HepG2 (cell line): ENCODE measurements at regions of chr7 and their contacts with region 1.

Region 1: DNA sequence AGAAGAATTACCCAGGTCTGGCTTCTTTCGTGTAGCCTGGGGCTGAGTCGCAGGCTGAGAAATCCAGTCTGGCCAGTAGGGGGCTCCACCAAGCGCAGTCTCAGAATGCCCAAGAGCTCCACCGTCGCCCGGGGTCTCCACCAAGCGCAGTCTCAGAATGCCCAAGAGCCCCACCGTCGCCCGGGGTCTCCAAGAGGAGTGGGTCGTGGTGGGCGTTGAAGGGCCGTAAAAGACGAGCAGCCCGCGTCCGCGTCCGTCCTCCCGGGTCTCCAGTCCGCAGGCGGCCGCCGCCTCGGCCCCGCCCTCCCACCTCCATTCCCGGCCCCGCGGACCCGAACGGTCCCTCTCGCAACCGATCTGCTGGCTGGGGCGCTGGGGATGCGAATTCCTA is 895 bp upstream of the ZYX start:
- DNase-seq: peak; percentile 61
- ATAC-seq: peak; percentile 73
- H3K4me3 ChIP-seq: peak overlapping the region; percentile 94 to 98 (median 98)
- H3K27ac ChIP-seq: peak overlapping the region; percentile 89
- H3K4me1 ChIP-seq: peaks cover 47% of the 10 kb centered on the region
- H3K27me3 ChIP-seq: no peaks in the 10 kb centered on the region
- CTCF ChIP-seq: peak; percentile 80
- EP300 ChIP-seq: no peak
- POLR2A ChIP-seq: 0 out of 4 replicates have a peak, but pooled peaks of 1 of the 2 experiments have one; percentile 5
- RAD21 ChIP-seq: peak; percentile 60; the same call in 1 of the 2 replicates

Region 2: GRCh38 chr7:143263266-143264195 is 116.7 kb before region 1 on chr7 and contains the start of gene GSTK1:
- CTCF ChIA-PET with region 1: no interaction called
- POLR2A ChIA-PET with region 1: interaction called, 10 read pairs
- in situ Hi-C with region 1: no loop called
- intact Hi-C with region 1: no loop called
- DNase-seq: peak; percentile 66
- ATAC-seq: peak; percentile 99
- H3K4me3 ChIP-seq: peak within 1 kb of the TSS; percentile 80 to 94 (median 94)
- H3K27ac ChIP-seq: peak within 1 kb of the TSS; percentile 92
- H3K4me1 ChIP-seq: peaks cover 41% of the 10 kb centered on the region
- H3K27me3 ChIP-seq: no peaks in the 10 kb centered on the region; a peak in 1 of 5 replicates
- CTCF ChIP-seq: peak; percentile 32
- EP300 ChIP-seq: peak in 1 of 2 experiments; percentile 22; a peak in 1 of 4 replicates
- POLR2A ChIP-seq: peak; percentile 88 to 98
- RAD21 ChIP-seq: peak; percentile 22
- total RNA-seq, gene GSTK1: 31.5 and 64.6 TPM in 2 replicates

Region 3: GRCh38 chr7:143287935-143288826 is 92.1 kb before region 1 on chr7 and contains the start of gene CASP2:
- CTCF ChIA-PET with region 1: no interaction called
- POLR2A ChIA-PET with region 1: interaction called, 3 read pairs
- in situ Hi-C with region 1: no loop called
- intact Hi-C with region 1: loop called (anchors 2 kb)
- DNase-seq: peak; percentile 89
- ATAC-seq: peak; percentile 68
- H3K4me3 ChIP-seq: peak within 1 kb of the TSS; percentile 72 to 80 (median 79)
- H3K27ac ChIP-seq: peak within 1 kb of the TSS; percentile 78
- H3K4me1 ChIP-seq: peaks cover 64% of the 10 kb centered on the region
- H3K27me3 ChIP-seq: no peaks in the 10 kb centered on the region; a peak in 1 of 5 replicates
- CTCF ChIP-seq: peak; percentile 50
- EP300 ChIP-seq: no peak
- POLR2A ChIP-seq: peak; percentile 87 to 92
- RAD21 ChIP-seq: peak; percentile 51
- total RNA-seq, gene CASP2: 13.7 and 21.2 TPM in 2 replicates

Region 4: DNA sequence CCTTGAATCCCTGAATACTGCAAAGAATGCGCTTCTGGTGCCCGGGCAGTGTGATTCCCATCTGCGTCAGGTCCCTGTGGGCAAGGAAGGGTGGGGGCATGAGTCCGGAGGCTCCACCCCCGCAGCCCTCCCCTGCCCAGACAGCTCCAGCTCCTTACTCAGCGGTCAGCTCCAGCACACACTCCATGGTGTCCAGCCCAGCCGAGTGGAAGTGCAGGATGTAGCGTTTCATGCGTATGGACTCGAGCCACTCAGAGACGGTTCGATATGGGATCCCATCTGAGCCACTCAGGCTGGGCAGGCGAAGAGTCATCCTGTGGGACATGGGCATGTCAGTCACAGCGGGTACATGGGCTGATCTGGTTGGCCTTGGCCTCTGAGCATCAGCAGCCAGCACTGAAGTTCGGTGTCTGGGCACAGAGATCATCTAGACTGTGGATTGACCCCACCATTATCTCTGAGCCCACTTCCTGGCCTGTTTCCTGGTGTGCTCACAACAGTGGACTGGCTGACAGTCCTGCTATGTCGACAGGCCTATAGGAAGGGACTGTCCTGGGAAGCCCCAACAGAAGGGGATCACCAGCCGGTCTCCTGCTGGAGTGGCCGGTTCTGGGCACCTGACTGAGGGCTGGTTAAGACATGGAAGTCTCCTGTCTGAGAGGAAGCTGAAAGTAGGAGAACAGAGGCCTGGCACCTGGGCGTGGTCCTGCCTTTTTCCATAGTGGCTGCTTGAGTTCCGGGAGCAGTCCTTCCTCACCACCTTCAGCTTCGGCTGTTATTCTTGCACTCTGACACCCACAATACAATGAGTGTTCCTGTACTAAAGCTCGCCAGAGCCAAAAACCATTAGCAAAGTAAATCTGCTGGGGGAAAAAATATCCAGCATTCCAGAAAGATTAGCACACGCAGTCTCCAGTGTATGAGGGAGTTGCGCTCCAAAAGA is 11.5 kb after region 1 on chr7:
- CTCF ChIA-PET with region 1: no interaction called
- POLR2A ChIA-PET with region 1: interaction called, 20 read pairs
- in situ Hi-C with region 1: no loop called
- intact Hi-C with region 1: loop called (anchors 1 kb)
- DNase-seq: no peak
- ATAC-seq: peak; percentile 1; the same call in 1 of the 3 replicates
- H3K4me3 ChIP-seq: no peak overlapping the region
- H3K27ac ChIP-seq: peak overlapping the region; percentile 82
- H3K4me1 ChIP-seq: peaks cover 69% of the 10 kb centered on the region
- H3K27me3 ChIP-seq: no peaks in the 10 kb centered on the region
- CTCF ChIP-seq: no peak
- EP300 ChIP-seq: 0 out of 4 replicates have a peak, but pooled peaks of 1 of the 2 experiments have one; percentile 14
- POLR2A ChIP-seq: no peak; a peak in 1 of 4 replicates
- RAD21 ChIP-seq: no peak

Region 5: DNA sequence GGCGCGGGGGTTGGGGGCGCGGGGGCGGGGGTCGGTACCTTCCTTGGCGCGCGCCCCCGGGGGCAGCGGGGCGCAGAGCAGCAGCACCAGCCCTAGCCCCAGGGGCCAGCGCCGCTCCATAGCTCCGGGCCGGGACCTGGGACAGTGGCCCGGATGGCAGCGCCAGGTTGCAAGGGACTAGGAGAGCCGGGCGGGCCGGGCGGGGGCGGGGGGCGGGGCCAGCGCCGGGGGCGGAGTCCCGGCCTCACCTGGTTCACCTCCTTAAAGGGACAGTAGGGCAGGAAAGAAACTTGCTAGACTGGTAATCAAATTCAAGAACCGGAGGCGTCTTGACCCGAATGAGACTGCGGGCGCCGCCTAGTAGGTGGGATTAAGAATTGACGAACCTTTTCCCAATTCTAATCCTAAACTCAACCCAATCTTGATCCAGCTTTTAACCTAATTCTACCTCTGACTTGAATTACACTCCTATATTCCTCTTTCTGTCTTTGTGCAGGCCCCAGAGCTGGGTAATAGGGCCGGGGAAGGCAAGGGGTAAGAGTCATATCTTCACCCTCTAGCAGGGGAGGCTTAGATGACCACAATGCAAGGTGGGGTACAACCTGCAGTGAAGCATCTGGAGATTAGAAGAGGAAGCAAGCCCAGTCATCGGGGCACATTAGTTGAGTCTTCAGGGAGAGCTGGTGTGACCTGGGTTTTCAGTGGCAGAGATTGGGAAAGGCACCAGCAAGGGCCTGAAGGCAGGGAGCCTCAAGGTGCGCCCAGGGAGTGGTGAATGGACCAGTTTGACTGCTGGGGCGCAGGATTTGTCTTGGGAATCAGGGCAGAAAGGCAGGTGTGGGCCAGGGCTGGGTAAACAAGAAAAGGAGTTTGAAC is 28.7 kb after region 1 on chr7 and contains the start of gene EPHA1:
- CTCF ChIA-PET with region 1: interaction called, 3 read pairs
- POLR2A ChIA-PET with region 1: interaction called, 9 read pairs
- in situ Hi-C with region 1: no loop called
- intact Hi-C with region 1: loop called (anchors 2 kb)
- DNase-seq: no peak
- ATAC-seq: peak; percentile 89
- H3K4me3 ChIP-seq: peak within 1 kb of the TSS; percentile 51 to 80 (median 71)
- H3K27ac ChIP-seq: no peak within 1 kb of the TSS
- H3K4me1 ChIP-seq: peaks cover 38% of the 10 kb centered on the region
- H3K27me3 ChIP-seq: peaks cover 0 to 6% of the 10 kb centered on the region in 2 experiments; a peak in 2 of 5 replicates
- CTCF ChIP-seq: 0 out of 2 replicates have a peak, but pooled peaks have one; percentile 3
- EP300 ChIP-seq: no peak
- POLR2A ChIP-seq: no peak
- RAD21 ChIP-seq: no peak
- total RNA-seq, gene EPHA1: 7.7 and 17.1 TPM in 2 replicates

Region 6: DNA sequence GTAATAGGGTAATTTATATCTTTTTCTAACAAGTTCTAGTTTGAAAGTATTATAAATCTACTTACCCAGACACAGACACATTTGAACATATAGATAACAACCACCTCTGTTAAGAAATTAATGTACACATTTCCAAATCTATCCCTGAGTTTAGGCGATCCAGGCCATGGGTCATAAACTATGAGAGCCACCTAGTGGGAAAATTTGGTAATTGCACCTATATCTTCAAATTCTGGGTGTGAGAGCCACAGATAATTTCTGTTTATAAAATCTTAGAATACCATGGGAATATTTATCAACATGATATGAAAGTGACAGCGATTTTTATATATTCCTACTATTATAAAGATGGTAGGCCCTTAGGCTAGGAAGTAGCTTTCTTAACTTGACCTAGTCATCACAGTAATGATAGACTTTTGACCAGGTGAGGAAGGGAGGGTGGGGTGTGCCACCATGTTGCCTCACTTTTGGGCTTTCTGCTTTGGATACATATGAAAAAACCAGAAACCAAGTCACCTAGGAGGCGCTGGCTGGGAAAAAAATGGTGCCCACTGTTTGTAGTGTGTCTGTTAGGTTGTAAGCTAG is 36.4 kb after region 1 on chr7:
- CTCF ChIA-PET with region 1: interaction called, 24 read pairs
- POLR2A ChIA-PET with region 1: no interaction called
- in situ Hi-C with region 1: loop called (anchors 5 kb)
- intact Hi-C with region 1: loop called (anchors 1 kb)
- DNase-seq: peak; percentile 48
- ATAC-seq: peak; percentile 74
- H3K4me3 ChIP-seq: no peak overlapping the region
- H3K27ac ChIP-seq: no peak overlapping the region
- H3K4me1 ChIP-seq: peaks cover 9% of the 10 kb centered on the region
- H3K27me3 ChIP-seq: peaks cover 2 to 14% of the 10 kb centered on the region in 2 experiments; a peak in 3 of 5 replicates
- CTCF ChIP-seq: peak; percentile 69
- EP300 ChIP-seq: no peak
- POLR2A ChIP-seq: no peak
- RAD21 ChIP-seq: peak; percentile 53; the same call in 1 of the 2 replicates

Region 7: GRCh38 chr7:143901668-143902331 is 521.5 kb after region 1 on chr7 and contains the start of gene TCAF1:
- CTCF ChIA-PET with region 1: no interaction called
- POLR2A ChIA-PET with region 1: no interaction called
- in situ Hi-C with region 1: loop called (anchors 25 kb)
- intact Hi-C with region 1: no loop called
- DNase-seq: peak; percentile 96
- ATAC-seq: peak; percentile 85
- H3K4me3 ChIP-seq: peak within 1 kb of the TSS; percentile 80 to 97 (median 90)
- H3K27ac ChIP-seq: peak within 1 kb of the TSS; percentile 99
- H3K4me1 ChIP-seq: peaks cover 64% of the 10 kb centered on the region
- H3K27me3 ChIP-seq: no peaks in the 10 kb centered on the region; a peak in 1 of 5 replicates
- CTCF ChIP-seq: peak; percentile 62
- EP300 ChIP-seq: peak; percentile 67 to 79; a peak in 3 of 4 replicates
- POLR2A ChIP-seq: peak; percentile 78 to 88
- RAD21 ChIP-seq: peak; percentile 52
- total RNA-seq, gene TCAF1: 101 and 124 TPM in 2 replicates